Activated CD4-positive, alpha-beta T cell treated with anti-CD3 and anti-CD28 coated beads, Interleukin-2, amount 10 ng/mL, durations not matched to agents 24 days and 14 days (primary cell): ENCODE measurements at regions of chr20 and their contacts with region 1.

Region 1: DNA sequence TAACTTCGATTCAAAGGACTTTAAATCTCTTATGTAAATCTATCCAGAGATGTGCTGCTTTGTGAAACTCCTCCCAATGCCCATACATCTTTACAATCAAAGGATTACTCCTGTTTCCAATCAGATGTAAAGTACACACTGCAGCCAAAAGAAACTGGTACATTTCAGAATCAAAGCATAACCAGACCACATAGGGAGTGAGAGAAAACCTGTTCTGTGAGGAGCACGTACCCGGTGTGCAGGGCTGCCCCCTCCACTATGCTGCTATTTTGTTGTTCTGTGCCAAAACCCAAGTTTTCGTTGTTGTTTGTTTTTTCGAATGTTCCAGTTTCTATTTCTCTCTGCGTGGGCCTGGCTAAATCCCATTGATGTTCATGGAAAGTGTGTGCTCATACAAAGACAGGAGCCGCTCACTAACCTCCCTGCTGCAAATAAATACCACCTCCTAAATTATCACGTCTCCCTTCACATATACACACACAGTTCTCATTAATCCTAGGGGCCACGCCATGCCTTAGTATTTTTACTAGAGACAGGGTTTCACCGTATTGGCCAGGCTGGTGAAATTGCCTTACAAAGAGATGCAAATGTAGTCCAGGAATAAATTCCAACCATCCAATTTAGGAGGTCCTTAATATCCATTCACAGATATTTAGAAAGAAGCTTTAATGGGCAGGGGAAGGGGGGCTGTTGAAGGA is 52.9 kb downstream of the ATP9A start:
- DNase-seq: no peak
- H3K4me3 Mint-ChIP-seq: peak overlapping the region; percentile 60
- H3K27ac Mint-ChIP-seq: peak overlapping the region; percentile 74
- H3K4me1 Mint-ChIP-seq: peaks cover 19% of the 10 kb centered on the region
- H3K27me3 Mint-ChIP-seq: peaks cover 2% of the 10 kb centered on the region

Region 2: DNA sequence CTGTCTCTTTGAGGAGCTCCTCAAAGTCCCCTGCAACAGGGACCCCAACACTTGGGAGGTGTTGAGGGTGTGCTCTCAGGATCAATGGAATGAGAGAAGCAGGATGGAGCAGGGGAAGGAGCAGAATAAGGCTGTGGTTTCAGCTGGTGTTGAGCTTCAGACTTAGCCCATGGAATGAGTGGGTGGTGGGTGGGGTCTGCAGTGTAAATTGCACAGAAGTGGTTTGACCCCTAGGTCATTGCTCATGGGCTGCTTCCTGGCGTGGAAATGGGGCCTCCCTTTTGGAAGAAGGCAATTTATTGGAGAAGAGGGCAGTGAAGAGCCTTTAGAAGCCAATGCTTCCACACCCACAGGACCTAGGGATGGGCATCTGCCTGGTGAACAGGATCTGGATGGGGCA is 655.5 kb before region 1 on chr20:
- intact Hi-C with region 1: loop called (anchors 5 kb)
- DNase-seq: no peak
- H3K4me3 Mint-ChIP-seq: no peak overlapping the region
- H3K27ac Mint-ChIP-seq: no peak overlapping the region
- H3K4me1 Mint-ChIP-seq: peaks cover 29% of the 10 kb centered on the region
- H3K27me3 Mint-ChIP-seq: peaks cover 6% of the 10 kb centered on the region

Region 3: GRCh38 chr20:51211191-51211590 is 504.1 kb before region 1 on chr20:
- intact Hi-C with region 1: no loop called
- DNase-seq: no peak
- H3K4me3 Mint-ChIP-seq: no peak overlapping the region
- H3K27ac Mint-ChIP-seq: no peak overlapping the region
- H3K4me1 Mint-ChIP-seq: no peaks in the 10 kb centered on the region
- H3K27me3 Mint-ChIP-seq: peaks cover 48% of the 10 kb centered on the region

Region 4: DNA sequence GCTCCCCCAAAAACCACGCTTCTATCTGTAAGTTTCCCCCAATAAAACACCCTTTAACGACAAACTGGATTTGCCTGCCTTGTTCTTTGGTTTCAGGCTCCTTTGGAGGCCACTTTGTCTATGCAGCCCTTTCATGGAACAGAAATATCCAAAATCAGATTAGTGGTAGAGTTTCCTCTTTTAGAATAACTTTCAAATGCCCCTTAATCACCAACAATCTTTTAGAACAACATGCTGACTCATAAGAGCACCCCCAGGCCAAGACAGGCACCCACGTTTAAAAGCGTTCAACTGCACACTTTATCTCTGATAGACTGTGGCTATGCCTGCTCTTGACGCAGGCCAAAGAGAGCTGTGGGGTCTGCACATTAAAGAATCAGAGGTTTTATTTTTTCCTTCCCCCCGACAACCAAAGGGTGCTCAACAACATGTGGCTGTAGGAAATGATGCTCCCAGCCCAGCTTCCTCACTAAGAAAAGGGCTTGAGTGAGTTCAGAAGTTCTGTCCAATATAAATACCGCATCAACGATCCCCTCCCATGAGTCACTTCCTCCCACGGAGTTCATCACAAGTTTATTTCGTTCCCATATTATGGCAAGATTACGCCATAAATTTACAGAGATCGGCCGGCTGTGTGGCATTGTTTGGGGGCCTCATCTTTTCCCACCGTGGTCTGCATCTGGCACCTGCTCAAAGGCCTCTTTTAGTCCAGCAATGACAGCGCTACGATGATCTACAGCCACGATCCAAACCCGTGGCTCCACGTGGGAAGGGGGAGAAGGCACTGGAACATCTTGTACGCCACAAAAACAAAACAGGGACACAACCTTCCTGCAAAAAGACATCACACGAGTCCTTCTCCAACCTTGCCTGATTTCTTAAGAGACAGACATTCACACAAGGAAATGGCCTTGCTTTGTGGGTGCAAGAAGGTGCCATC is 84.0 kb before region 1 on chr20:
- intact Hi-C with region 1: loop called (anchors 2 kb)
- DNase-seq: peak; percentile 70
- H3K4me3 Mint-ChIP-seq: peak overlapping the region; percentile 50
- H3K27ac Mint-ChIP-seq: peak overlapping the region; percentile 90
- H3K4me1 Mint-ChIP-seq: peaks cover 37% of the 10 kb centered on the region
- H3K27me3 Mint-ChIP-seq: peaks cover 13% of the 10 kb centered on the region

Region 5: GRCh38 chr20:51695574-51696303 is 19.6 kb before region 1 on chr20:
- intact Hi-C with region 1: loop called (anchors 2 kb)
- DNase-seq: peak; percentile 56
- H3K4me3 Mint-ChIP-seq: peak overlapping the region; percentile 48
- H3K27ac Mint-ChIP-seq: peak overlapping the region; percentile 59
- H3K4me1 Mint-ChIP-seq: peaks cover 19% of the 10 kb centered on the region
- H3K27me3 Mint-ChIP-seq: peaks cover 18% of the 10 kb centered on the region

Region 6: DNA sequence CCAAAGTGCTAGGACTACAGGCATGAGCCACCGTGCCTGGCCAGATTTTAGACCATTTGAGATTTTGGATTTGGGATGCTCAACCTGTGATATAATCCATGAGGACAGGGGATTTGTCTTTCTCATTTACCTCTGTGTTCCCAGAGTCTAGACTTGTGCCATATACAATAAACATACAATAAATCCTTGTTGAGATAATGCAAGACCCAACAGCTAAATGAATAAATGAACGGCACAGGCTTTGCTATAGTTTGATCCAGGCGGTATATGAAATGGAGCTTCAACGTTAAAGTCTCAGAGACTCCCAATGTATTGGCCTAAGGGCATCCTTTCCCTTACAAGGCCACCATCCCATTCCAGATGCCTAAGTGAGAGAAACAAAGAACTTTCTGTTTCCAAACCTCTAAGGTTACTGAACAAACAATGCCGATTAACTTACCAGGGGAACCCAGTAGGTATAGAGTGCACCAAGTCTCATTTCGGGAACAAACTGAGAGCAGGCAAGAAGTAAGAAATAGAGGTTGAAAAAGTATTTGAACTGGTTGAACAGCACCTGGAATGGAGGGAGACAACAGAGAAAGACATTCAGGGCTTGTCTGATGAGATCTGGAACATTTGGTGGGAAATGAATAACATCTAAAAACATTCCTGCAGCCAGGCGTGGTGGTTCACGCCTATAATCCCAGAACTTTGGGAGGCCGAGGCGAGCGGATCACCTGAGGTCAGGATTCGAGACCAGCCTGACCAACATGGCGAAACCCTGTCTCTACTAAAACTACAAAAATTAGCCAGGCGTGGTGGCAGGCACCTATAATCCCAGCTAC is 10.3 kb after region 1 on chr20:
- intact Hi-C with region 1: no loop called
- DNase-seq: no peak
- H3K4me3 Mint-ChIP-seq: no peak overlapping the region
- H3K27ac Mint-ChIP-seq: no peak overlapping the region
- H3K4me1 Mint-ChIP-seq: peaks cover 13% of the 10 kb centered on the region
- H3K27me3 Mint-ChIP-seq: peaks cover 7% of the 10 kb centered on the region

Region 7: DNA sequence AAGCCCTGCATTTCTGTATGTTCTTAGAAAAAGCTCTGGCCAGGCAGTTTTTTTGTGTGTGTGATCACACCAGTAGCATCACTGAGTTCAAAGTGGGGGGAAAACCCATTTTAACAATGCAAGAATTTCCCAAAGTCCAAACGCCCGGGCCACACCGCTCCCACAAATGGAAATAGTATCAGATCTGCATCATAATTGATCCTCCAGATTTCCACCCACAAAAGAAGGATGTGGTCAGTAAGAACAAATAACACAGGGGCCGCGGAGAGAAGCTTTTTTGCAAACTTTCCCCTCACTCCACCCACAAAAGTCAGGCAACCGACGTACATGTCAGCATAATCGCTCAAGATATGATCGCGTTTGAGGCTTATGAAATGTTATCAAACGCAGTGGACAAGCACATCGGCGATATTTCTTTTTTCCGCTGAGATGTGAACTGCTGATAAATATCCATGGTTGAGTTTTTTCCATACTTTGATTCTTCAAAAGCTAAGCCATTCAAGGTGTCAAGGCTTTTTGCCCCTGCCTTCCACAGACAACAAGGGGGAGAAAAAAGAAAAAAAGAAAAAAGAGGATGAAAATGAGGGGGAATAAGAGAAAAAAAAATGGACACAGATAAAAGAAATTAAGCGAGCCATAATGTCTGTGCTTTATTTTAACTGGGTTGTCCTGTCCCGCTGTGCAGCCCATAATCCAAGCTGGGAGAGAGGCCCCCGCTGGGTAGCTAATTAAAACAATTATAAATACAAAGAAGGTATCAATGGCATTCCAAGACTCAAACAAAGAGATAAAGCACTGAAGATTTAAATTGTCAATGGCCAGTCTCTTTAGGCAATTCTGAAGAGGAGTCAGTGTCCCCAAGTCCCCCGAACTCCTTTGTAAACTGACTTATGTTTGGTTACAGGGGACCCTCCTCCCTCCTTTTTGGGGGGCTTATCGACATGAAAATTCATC is 332.8 kb after region 1 on chr20:
- intact Hi-C with region 1: loop called (anchors 5 kb)
- DNase-seq: peak; percentile 81
- H3K4me3 Mint-ChIP-seq: peak overlapping the region; percentile 63
- H3K27ac Mint-ChIP-seq: peak overlapping the region; percentile 85
- H3K4me1 Mint-ChIP-seq: peaks cover 30% of the 10 kb centered on the region
- H3K27me3 Mint-ChIP-seq: peaks cover 4% of the 10 kb centered on the region